Caco-2 (cell line): ENCODE measurements at regions of chr13 and their contacts with region 1.

Region 1: DNA sequence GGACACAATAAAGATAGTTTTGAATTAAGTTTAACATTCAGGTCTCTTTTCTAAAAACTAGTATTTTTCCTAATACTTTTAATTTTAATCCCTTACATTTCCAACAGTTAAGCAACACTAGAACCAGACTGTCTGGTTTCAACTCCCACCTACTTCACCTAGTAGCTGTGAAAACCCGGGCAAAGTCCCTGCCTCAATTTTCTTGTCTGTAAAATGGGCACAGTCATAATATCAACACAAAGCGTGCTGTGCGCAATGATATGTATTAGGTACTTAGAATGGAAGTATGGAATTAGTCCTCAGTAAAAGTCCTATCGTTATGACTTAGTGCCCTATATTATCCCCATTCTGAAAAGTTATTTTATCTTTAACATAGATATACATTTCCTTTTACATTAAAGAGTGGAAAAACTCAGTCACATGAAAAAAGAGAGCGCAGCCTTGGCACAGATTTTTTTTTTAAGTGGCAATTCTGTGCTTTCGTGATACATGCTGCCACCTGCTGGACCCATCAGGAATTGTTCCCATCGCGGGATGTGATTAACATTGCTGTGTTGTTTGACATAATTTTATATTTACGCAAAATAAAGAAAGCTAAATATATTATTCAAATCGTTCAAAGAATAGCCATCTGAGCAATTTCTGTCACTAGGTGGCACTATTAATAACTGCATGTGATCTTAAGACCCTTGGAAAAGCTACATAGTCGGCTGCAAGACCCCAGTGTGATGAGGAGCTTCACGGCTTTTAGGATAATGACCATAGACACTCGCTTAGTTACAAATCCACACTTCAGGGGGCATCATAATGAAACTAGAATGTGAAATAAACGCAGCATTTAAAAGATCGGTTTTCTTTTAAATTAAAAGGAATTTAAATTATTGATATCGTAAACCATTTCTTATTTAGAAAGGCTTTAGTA is 59.9 kb downstream of the LIG4 start:
- DNase-seq: peak; percentile 64 to 75
- H3K4me3 ChIP-seq: no peak overlapping the region
- H3K4me3 Mint-ChIP-seq: no peak overlapping the region
- H3K27ac Mint-ChIP-seq: peak overlapping the region; percentile 98
- H3K4me1 ChIP-seq: peaks cover 25% of the 10 kb centered on the region
- H3K4me1 Mint-ChIP-seq: peaks cover 11% of the 10 kb centered on the region
- H3K27me3 ChIP-seq: no peaks in the 10 kb centered on the region
- H3K27me3 Mint-ChIP-seq: no peaks in the 10 kb centered on the region
- CTCF ChIP-seq: peak; percentile 59 to 89

Region 2: GRCh38 chr13:107373551-107373950 is 781.9 kb before region 1 on chr13:
- CTCF ChIA-PET with region 1: no interaction called
- POLR2A ChIA-PET with region 1: no interaction called
- intact Hi-C with region 1: loop called (anchors 1 kb)
- DNase-seq: peak in 1 of 2 experiments; percentile 11
- H3K4me3 ChIP-seq: no peak overlapping the region
- H3K4me3 Mint-ChIP-seq: no peak overlapping the region
- H3K27ac Mint-ChIP-seq: no peak overlapping the region
- H3K4me1 ChIP-seq: no peaks in the 10 kb centered on the region
- H3K4me1 Mint-ChIP-seq: no peaks in the 10 kb centered on the region
- H3K27me3 ChIP-seq: no peaks in the 10 kb centered on the region
- H3K27me3 Mint-ChIP-seq: peaks cover 14% of the 10 kb centered on the region
- CTCF ChIP-seq: peak; percentile 44 to 74

Region 3: GRCh38 chr13:107743983-107744382 is 411.5 kb before region 1 on chr13:
- CTCF ChIA-PET with region 1: no interaction called
- POLR2A ChIA-PET with region 1: no interaction called
- intact Hi-C with region 1: loop called (anchors 2 kb)
- DNase-seq: no peak
- H3K4me3 ChIP-seq: no peak overlapping the region
- H3K4me3 Mint-ChIP-seq: no peak overlapping the region
- H3K27ac Mint-ChIP-seq: no peak overlapping the region
- H3K4me1 ChIP-seq: no peaks in the 10 kb centered on the region
- H3K4me1 Mint-ChIP-seq: no peaks in the 10 kb centered on the region
- H3K27me3 ChIP-seq: no peaks in the 10 kb centered on the region
- H3K27me3 Mint-ChIP-seq: no peaks in the 10 kb centered on the region
- CTCF ChIP-seq: no peak

Region 4: GRCh38 chr13:108020027-108020426 is 135.4 kb before region 1 on chr13:
- CTCF ChIA-PET with region 1: no interaction called
- POLR2A ChIA-PET with region 1: no interaction called
- intact Hi-C with region 1: loop called (anchors 1 kb)
- DNase-seq: peak in 1 of 2 experiments; percentile 45
- H3K4me3 ChIP-seq: no peak overlapping the region
- H3K4me3 Mint-ChIP-seq: no peak overlapping the region
- H3K27ac Mint-ChIP-seq: no peak overlapping the region
- H3K4me1 ChIP-seq: 0 out of 2 replicates have a peak, but pooled peaks cover 4% of the 10 kb centered on the region
- H3K4me1 Mint-ChIP-seq: peaks cover 8% of the 10 kb centered on the region
- H3K27me3 ChIP-seq: no peaks in the 10 kb centered on the region
- H3K27me3 Mint-ChIP-seq: no peaks in the 10 kb centered on the region
- CTCF ChIP-seq: no peak

Region 5: GRCh38 chr13:108031865-108032264 is 123.6 kb before region 1 on chr13:
- CTCF ChIA-PET with region 1: no interaction called
- POLR2A ChIA-PET with region 1: no interaction called
- intact Hi-C with region 1: no loop called
- DNase-seq: no peak
- H3K4me3 ChIP-seq: no peak overlapping the region
- H3K4me3 Mint-ChIP-seq: no peak overlapping the region
- H3K27ac Mint-ChIP-seq: no peak overlapping the region
- H3K4me1 ChIP-seq: peaks cover 5% of the 10 kb centered on the region; the same call in 1 of the 2 replicates
- H3K4me1 Mint-ChIP-seq: peaks cover 7% of the 10 kb centered on the region
- H3K27me3 ChIP-seq: no peaks in the 10 kb centered on the region
- H3K27me3 Mint-ChIP-seq: no peaks in the 10 kb centered on the region
- CTCF ChIP-seq: no peak

Region 6: GRCh38 chr13:108102771-108103170 is 52.7 kb before region 1 on chr13:
- CTCF ChIA-PET with region 1: no interaction called
- POLR2A ChIA-PET with region 1: no interaction called
- intact Hi-C with region 1: no loop called
- DNase-seq: no peak
- H3K4me3 ChIP-seq: no peak overlapping the region
- H3K4me3 Mint-ChIP-seq: no peak overlapping the region
- H3K27ac Mint-ChIP-seq: no peak overlapping the region
- H3K4me1 ChIP-seq: 0 out of 2 replicates have a peak, but pooled peaks cover 5% of the 10 kb centered on the region
- H3K4me1 Mint-ChIP-seq: no peaks in the 10 kb centered on the region
- H3K27me3 ChIP-seq: no peaks in the 10 kb centered on the region
- H3K27me3 Mint-ChIP-seq: no peaks in the 10 kb centered on the region
- CTCF ChIP-seq: no peak

Region 7: DNA sequence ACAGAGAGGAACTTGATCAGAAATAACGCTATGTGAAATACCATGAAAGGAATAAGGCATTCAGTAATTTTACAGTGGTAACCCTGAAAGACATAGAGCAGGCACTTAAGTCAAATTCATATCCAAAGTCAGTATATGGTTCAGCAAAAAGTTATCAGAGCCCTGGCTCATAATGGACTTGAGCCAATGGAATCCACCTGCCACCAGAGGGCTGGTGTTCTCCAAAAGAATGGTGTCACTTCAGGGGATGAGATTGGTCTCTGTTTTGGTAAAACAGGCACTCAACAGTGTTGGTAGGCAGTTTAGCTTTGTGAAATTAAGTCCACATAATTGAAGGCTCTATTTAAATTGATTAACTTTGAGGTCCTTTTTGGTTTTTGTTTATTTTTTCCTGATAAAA is 34.0 kb before region 1 on chr13:
- CTCF ChIA-PET with region 1: no interaction called
- POLR2A ChIA-PET with region 1: no interaction called
- intact Hi-C with region 1: loop called (anchors 1 kb)
- DNase-seq: peak in 1 of 2 experiments; percentile 23
- H3K4me3 ChIP-seq: no peak overlapping the region
- H3K4me3 Mint-ChIP-seq: no peak overlapping the region
- H3K27ac Mint-ChIP-seq: no peak overlapping the region
- H3K4me1 ChIP-seq: peaks cover 9% of the 10 kb centered on the region
- H3K4me1 Mint-ChIP-seq: no peaks in the 10 kb centered on the region
- H3K27me3 ChIP-seq: no peaks in the 10 kb centered on the region
- H3K27me3 Mint-ChIP-seq: no peaks in the 10 kb centered on the region
- CTCF ChIP-seq: peak in 1 of 2 experiments; percentile 35

Region 8: DNA sequence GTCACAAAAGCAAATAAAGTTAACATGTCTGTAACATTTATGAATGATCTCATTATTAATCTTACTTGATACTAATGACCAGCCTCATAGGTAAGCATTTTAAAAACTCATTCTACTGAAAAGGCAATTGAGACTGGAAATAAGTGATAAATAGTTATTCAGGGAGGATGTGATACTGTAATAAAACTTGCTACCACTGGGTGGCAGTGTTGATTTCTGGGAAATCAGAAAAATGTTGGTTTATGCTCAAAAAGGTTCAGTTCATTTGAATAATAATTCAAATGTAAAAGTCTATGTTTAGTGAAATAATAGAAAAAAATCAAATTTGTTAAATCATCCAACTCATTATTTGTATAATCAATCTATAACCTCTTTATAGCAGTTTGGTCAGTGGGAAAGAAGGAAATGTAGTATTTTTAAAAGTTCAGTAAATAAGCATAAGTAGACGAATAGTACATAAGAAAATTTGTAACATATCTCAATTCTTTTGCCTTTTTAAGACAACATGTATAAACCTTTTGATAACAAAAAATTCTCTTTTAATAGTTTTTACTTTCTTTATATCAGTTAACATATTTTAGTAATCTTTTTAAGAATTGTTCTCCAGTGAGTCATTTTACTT is 72.3 kb after region 1 on chr13:
- CTCF ChIA-PET with region 1: no interaction called
- POLR2A ChIA-PET with region 1: interaction called, 3 read pairs
- intact Hi-C with region 1: loop called (anchors 2 kb)
- DNase-seq: peak in 1 of 2 experiments; percentile 60
- H3K4me3 ChIP-seq: no peak overlapping the region
- H3K4me3 Mint-ChIP-seq: no peak overlapping the region
- H3K27ac Mint-ChIP-seq: no peak overlapping the region
- H3K4me1 ChIP-seq: peaks cover 28% of the 10 kb centered on the region
- H3K4me1 Mint-ChIP-seq: peaks cover 28% of the 10 kb centered on the region
- H3K27me3 ChIP-seq: no peaks in the 10 kb centered on the region
- H3K27me3 Mint-ChIP-seq: no peaks in the 10 kb centered on the region
- CTCF ChIP-seq: peak; percentile 64 to 68

Region 9: GRCh38 chr13:108383667-108384066 is 228.2 kb after region 1 on chr13:
- CTCF ChIA-PET with region 1: no interaction called
- POLR2A ChIA-PET with region 1: no interaction called
- intact Hi-C with region 1: no loop called
- DNase-seq: no peak
- H3K4me3 ChIP-seq: no peak overlapping the region
- H3K4me3 Mint-ChIP-seq: no peak overlapping the region
- H3K27ac Mint-ChIP-seq: no peak overlapping the region
- H3K4me1 ChIP-seq: no peaks in the 10 kb centered on the region
- H3K4me1 Mint-ChIP-seq: no peaks in the 10 kb centered on the region
- H3K27me3 ChIP-seq: no peaks in the 10 kb centered on the region; the same call in 1 of the 2 replicates
- H3K27me3 Mint-ChIP-seq: no peaks in the 10 kb centered on the region
- CTCF ChIP-seq: no peak